ENCODE measurements at regions of chr19 and their contacts with region 1.

Region 1: GRCh38 chr19:37594304-37594981 is at the starts of genes ZNF540 and ZNF571:
- DNase-seq: peak; percentile 87 to 90
- H3K4me3 ChIP-seq: peak within 1 kb of the TSS; percentile 75
- H3K27ac ChIP-seq: peak within 1 kb of the TSS; percentile 68
- H3K4me1 ChIP-seq: peaks cover 18% of the 10 kb centered on the region; the same call in 1 of the 2 replicates
- H3K27me3 ChIP-seq: no peaks in the 10 kb centered on the region
- CTCF ChIP-seq: no peak
- total RNA-seq, gene ZNF540: 0.25 and 0.37 TPM in 2 replicates
- total RNA-seq, gene ZNF571: 2.1 and 2.2 TPM in 2 replicates

Region 2: GRCh38 chr19:37370880-37371661 is 223.4 kb before region 1 on chr19 and contains the start of gene ZNF527:
- CTCF ChIA-PET with region 1: no interaction called
- POLR2A ChIA-PET with region 1: interaction called, 3 read pairs
- intact Hi-C with region 1: loop called (anchors 2 kb)
- DNase-seq: peak; percentile 90 to 95
- H3K4me3 ChIP-seq: peak within 1 kb of the TSS; percentile 85
- H3K27ac ChIP-seq: no peak within 1 kb of the TSS
- H3K4me1 ChIP-seq: 0 out of 2 replicates have a peak, but pooled peaks cover 4% of the 10 kb centered on the region
- H3K27me3 ChIP-seq: no peaks in the 10 kb centered on the region
- CTCF ChIP-seq: no peak
- total RNA-seq, gene ZNF527: 2.9 and 3.2 TPM in 2 replicates

Region 3: DNA sequence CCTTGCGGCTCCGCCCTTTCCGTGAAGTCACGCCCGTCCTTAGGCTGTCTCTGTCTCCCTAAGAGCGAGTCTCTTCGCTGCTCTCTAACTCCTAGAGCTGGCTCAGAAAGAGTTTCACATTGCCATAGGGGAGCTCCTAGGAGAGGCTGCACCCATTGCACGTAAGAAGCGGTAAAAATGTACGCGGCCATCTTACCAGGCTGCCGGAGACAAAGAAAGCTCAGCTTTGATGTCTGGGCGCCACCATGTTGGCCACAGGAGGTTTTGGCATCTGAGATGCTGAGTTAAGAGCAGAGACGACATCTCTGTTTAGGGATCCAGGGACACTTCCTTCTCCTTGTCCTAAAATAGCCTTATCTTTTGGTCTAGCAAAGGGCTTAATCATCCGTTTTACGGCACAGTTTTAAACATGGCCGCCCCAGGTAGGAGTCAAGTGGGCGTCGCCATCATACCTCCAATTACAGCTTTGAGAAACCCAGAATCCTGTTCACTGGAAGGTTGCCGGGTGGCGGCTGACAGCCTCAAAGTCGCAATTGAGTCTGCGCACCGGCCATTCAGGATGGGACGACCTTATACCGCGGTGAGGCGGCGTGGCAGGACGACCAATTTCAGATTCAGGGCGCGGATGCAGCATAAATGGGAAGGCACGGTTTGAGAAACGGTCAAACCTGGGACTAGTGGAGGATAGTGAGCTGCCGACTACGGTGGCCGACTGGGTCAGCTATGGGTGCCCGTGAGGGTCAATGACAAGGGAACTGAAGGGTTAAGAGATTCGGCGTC is 87.9 kb before region 1 on chr19 and contains the start of gene ZNF793:
- CTCF ChIA-PET with region 1: no interaction called
- POLR2A ChIA-PET with region 1: interaction called, 7 read pairs
- intact Hi-C with region 1: loop called (anchors 2 kb)
- DNase-seq: peak; percentile 75
- H3K4me3 ChIP-seq: peak within 1 kb of the TSS; percentile 86
- H3K27ac ChIP-seq: peak within 1 kb of the TSS; percentile 80
- H3K4me1 ChIP-seq: no peaks in the 10 kb centered on the region
- H3K27me3 ChIP-seq: no peaks in the 10 kb centered on the region
- CTCF ChIP-seq: no peak
- total RNA-seq, gene ZNF793: 5.2 and 7.2 TPM in 2 replicates

Region 4: DNA sequence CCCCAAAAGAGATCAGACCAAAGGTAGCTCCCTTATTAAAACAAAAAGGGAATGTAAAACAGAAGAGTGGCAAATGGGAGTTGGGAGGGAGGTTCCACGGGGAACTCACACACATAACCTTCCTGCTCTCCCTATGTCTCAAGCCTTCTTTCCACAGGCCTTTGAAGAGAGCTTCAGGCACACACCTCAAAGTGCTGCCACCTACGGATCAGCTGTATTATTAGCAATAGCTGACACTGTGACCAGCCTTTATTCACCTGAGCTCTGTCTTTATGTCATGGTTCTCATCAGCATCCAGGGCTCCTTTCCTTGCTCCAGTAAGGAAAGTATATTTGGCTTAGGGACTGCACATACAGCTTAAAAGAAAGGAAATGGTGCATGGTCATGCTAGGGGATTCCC is 11.1 kb before region 1 on chr19:
- CTCF ChIA-PET with region 1: no interaction called
- POLR2A ChIA-PET with region 1: no interaction called
- intact Hi-C with region 1: no loop called
- DNase-seq: no peak
- H3K4me3 ChIP-seq: no peak overlapping the region
- H3K27ac ChIP-seq: no peak overlapping the region
- H3K4me1 ChIP-seq: no peaks in the 10 kb centered on the region
- H3K27me3 ChIP-seq: no peaks in the 10 kb centered on the region
- CTCF ChIP-seq: no peak

Region 5: GRCh38 chr19:38062959-38063761 is 468.7 kb after region 1 on chr19:
- CTCF ChIA-PET with region 1: no interaction called
- POLR2A ChIA-PET with region 1: no interaction called
- intact Hi-C with region 1: no loop called
- DNase-seq: no peak
- H3K4me3 ChIP-seq: no peak overlapping the region
- H3K27ac ChIP-seq: no peak overlapping the region
- H3K4me1 ChIP-seq: peaks cover 23% of the 10 kb centered on the region
- H3K27me3 ChIP-seq: no peaks in the 10 kb centered on the region
- CTCF ChIP-seq: no peak